Activated naive CD4-positive, alpha-beta T cell treated with anti-CD3 and anti-CD28 coated beads for 36 hours (primary cell): ENCODE measurements at regions of chr13 and their contacts with region 1.

Region 1: DNA sequence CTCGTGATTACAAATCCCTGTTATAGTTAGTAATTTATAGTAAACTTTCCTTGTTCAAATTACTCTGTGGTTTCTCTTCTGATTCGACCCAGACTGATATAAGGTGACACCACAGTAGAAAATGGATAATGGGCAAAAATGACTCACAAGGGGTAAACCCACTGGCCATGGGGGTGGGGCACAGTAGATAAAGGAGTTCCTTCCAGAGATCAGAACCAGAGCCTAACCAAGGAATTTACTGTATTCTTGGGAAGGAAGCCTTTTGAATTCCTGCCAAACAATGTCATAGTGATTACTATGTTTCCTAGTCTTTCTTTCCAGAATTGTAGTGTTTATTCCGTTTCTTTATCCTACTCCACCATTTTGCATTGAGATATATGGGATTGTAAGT is 21.9 kb downstream of the MIR17HG start:
- DNase-seq: peak; percentile 61
- H3K4me3 Mint-ChIP-seq: no peak overlapping the region
- H3K27ac Mint-ChIP-seq: peak overlapping the region; percentile 83
- H3K4me1 Mint-ChIP-seq: peaks cover 30% of the 10 kb centered on the region
- H3K27me3 Mint-ChIP-seq: peaks cover 3% of the 10 kb centered on the region

Region 2: DNA sequence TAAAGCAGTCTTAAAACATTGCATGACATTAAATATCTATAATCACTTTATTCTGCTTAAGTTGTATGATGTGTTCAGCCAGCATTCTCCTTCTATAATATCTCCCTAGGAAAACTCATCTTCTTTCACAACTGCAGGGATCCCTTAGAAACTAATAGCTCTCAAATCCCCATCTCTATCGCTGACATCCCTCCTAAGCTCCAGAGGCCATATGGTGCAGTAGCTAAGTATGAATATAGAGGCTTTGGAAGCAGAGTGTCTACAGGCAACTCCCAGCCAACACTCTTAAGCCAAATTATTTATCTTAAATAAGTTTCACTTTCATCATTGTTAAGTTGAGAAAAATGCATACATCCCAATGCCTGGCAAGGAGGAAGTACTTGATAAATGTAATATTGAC is 371.5 kb before region 1 on chr13:
- CTCF ChIA-PET with region 1: no interaction called
- intact Hi-C with region 1: no loop called
- DNase-seq: no peak
- H3K4me3 Mint-ChIP-seq: no peak overlapping the region
- H3K27ac Mint-ChIP-seq: no peak overlapping the region
- H3K4me1 Mint-ChIP-seq: no peaks in the 10 kb centered on the region
- H3K27me3 Mint-ChIP-seq: no peaks in the 10 kb centered on the region

Region 3: DNA sequence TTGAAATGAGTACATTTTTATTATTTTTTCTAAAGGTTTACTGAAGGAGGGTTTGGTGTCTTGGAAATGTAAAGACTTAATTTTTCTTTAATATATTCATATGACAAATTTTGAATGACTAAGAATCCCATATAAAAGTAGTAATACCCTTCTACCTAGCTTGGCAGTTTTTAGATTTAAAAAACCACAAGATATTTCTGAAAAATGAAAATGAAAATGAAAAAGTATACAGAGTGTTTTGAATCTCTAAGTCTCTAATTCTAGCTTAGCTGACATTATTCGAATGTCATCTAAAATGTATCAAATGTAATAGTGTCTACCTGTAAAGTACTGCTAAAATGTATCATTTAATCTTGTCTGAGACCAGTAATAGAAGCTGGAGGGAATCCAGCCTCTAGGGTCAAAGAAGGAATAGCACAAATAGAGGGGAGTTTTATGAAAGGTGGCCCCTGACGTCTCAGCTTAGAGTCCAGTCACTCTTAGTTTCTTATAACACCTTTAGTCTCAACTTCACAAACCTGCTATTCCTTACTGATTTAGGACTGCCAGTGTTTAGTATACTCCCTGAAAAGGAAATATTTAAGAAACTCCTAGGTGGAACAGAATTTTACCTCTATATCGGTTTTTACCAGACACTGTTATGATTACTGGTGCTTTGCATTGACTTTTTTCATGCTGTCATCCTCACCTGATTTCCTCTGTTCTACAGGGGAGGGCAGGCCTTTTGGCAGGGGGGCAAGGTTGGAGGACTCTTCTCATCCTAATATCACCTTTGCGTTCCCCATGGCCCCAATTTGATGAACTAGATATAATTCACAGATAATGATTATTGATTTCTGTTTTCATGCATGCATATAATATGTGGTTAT is 38.2 kb before region 1 on chr13:
- CTCF ChIA-PET with region 1: no interaction called
- intact Hi-C with region 1: loop called (anchors 1 kb)
- DNase-seq: no peak
- H3K4me3 Mint-ChIP-seq: peak overlapping the region; percentile 22
- H3K27ac Mint-ChIP-seq: peak overlapping the region; percentile 41
- H3K4me1 Mint-ChIP-seq: peaks cover 22% of the 10 kb centered on the region
- H3K27me3 Mint-ChIP-seq: no peaks in the 10 kb centered on the region

Region 4: GRCh38 chr13:91398413-91399272 is 29.2 kb after region 1 on chr13 and contains the start of gene GPC5:
- CTCF ChIA-PET with region 1: interaction called, 11 read pairs
- intact Hi-C with region 1: loop called (anchors 1 kb)
- DNase-seq: peak; percentile 84
- H3K4me3 Mint-ChIP-seq: peak within 1 kb of the TSS; percentile 75
- H3K27ac Mint-ChIP-seq: no peak within 1 kb of the TSS
- H3K4me1 Mint-ChIP-seq: peaks cover 17% of the 10 kb centered on the region
- H3K27me3 Mint-ChIP-seq: peaks cover 52% of the 10 kb centered on the region
- total RNA-seq, gene GPC5: 0.38 to 0.40 TPM

Region 5: GRCh38 chr13:91468301-91468700 is 98.9 kb after region 1 on chr13:
- CTCF ChIA-PET with region 1: no interaction called
- intact Hi-C with region 1: no loop called
- DNase-seq: no peak
- H3K4me3 Mint-ChIP-seq: no peak overlapping the region
- H3K27ac Mint-ChIP-seq: no peak overlapping the region
- H3K4me1 Mint-ChIP-seq: no peaks in the 10 kb centered on the region
- H3K27me3 Mint-ChIP-seq: peaks cover 5% of the 10 kb centered on the region

Region 6: DNA sequence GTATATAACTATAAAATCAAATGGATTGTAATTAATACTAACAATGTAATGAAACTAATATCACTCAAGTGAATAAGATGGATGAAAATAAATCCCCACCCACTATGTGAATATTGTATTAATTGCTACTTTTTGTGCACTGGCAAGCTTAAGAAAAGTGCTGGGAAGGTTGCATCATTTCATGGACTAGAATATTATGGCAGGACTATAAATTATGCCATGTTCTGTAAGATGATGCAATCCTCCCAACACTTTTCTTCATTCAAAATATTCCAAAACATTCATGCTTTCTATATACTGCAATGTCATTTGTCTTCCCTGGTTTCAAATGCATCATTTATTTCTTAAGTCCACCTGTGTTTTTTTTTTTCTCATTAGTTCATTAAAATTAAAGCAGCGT is 1399.6 kb after region 1 on chr13:
- CTCF ChIA-PET with region 1: no interaction called
- intact Hi-C with region 1: no loop called
- DNase-seq: no peak
- H3K4me3 Mint-ChIP-seq: no peak overlapping the region
- H3K27ac Mint-ChIP-seq: no peak overlapping the region
- H3K4me1 Mint-ChIP-seq: no peaks in the 10 kb centered on the region
- H3K27me3 Mint-ChIP-seq: no peaks in the 10 kb centered on the region